ENCODE measurements at regions of chr15 and their contacts with region 1.

Region 1: GRCh38 chr15:72770673-72771328 is 12.8 kb downstream of the ADPGK start:
- DNase-seq: no peak
- H3K4me3 ChIP-seq: no peak overlapping the region
- H3K27ac ChIP-seq: no peak overlapping the region
- H3K4me1 ChIP-seq: peaks cover 23% of the 10 kb centered on the region
- CTCF ChIP-seq: peak; percentile 48; the same call in 1 of the 2 replicates

Region 2: DNA sequence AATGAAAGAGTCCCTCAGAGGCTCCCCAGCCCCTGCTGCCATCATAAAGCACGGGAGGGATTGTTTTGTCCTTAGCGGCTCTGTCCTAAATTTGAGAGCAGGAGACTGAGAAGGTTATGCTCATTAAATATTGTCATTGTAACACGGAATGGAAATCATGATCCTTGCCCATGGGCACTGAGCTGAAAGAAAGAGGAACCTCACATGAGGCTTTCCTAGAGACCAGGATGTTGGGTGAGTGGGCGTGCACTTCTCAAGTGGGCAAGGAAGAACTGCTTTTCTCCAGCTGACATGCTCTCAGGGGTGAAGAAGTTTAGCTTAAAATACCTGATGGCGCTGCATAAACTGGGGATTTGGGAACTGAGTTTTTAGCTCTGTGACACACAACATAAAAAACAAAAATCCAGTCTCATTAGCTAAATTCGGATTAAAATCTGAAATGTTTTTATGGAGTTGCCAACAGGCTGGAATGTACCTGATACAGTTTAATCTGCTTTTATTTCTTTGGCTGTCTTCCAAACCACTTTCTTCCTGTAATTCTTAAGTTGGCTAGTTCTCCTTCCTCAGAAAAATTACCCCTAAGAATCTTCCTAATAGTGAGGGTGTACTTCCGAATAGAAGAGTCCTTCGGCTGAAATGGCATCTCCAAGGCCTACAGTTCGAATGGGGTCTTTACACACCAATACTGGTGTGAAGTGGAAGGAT is 18.9 kb before region 1 on chr15:
- CTCF ChIA-PET with region 1: no interaction called
- POLR2A ChIA-PET with region 1: interaction called, 13 read pairs
- intact Hi-C with region 1: no loop called
- DNase-seq: no peak
- H3K4me3 ChIP-seq: no peak overlapping the region
- H3K27ac ChIP-seq: no peak overlapping the region
- H3K4me1 ChIP-seq: no peaks in the 10 kb centered on the region
- CTCF ChIP-seq: no peak